ENCODE measurements at regions of chr13 and their contacts with region 1.

Region 1: GRCh38 chr13:97432917-97433726 is 847 bp upstream of the RAP2A start:
- DNase-seq: peak; percentile 100
- H3K4me3 Mint-ChIP-seq: peak overlapping the region; percentile 85
- H3K27ac Mint-ChIP-seq: peak overlapping the region; percentile 91
- H3K4me1 Mint-ChIP-seq: peaks cover 28% of the 10 kb centered on the region
- H3K27me3 Mint-ChIP-seq: no peaks in the 10 kb centered on the region
- CTCF ChIP-seq: no peak

Region 2: GRCh38 chr13:95564733-95565291 is 1868.3 kb before region 1 on chr13:
- CTCF ChIA-PET with region 1: no interaction called
- POLR2A ChIA-PET with region 1: no interaction called
- intact Hi-C with region 1: loop called (anchors 10 kb)
- DNase-seq: peak; percentile 92
- H3K4me3 Mint-ChIP-seq: peak overlapping the region; percentile 56
- H3K27ac Mint-ChIP-seq: peak overlapping the region; percentile 17
- H3K4me1 Mint-ChIP-seq: peaks cover 26% of the 10 kb centered on the region
- H3K27me3 Mint-ChIP-seq: no peaks in the 10 kb centered on the region
- CTCF ChIP-seq: no peak

Region 3: GRCh38 chr13:97124916-97125809 is 308.0 kb before region 1 on chr13:
- CTCF ChIA-PET with region 1: no interaction called
- POLR2A ChIA-PET with region 1: interaction called, 7 read pairs
- intact Hi-C with region 1: loop called (anchors 1 kb)
- DNase-seq: peak; percentile 89
- H3K4me3 Mint-ChIP-seq: peak overlapping the region; percentile 28
- H3K27ac Mint-ChIP-seq: peak overlapping the region; percentile 21
- H3K4me1 Mint-ChIP-seq: peaks cover 47% of the 10 kb centered on the region
- H3K27me3 Mint-ChIP-seq: no peaks in the 10 kb centered on the region
- CTCF ChIP-seq: no peak

Region 4: GRCh38 chr13:97367016-97367822 is 65.9 kb before region 1 on chr13:
- CTCF ChIA-PET with region 1: interaction called, 7 read pairs
- POLR2A ChIA-PET with region 1: interaction called, 12 read pairs
- intact Hi-C with region 1: no loop called
- DNase-seq: peak; percentile 18
- H3K4me3 Mint-ChIP-seq: no peak overlapping the region
- H3K27ac Mint-ChIP-seq: peak overlapping the region; percentile 62
- H3K4me1 Mint-ChIP-seq: peaks cover 6% of the 10 kb centered on the region
- H3K27me3 Mint-ChIP-seq: no peaks in the 10 kb centered on the region
- CTCF ChIP-seq: no peak

Region 5: DNA sequence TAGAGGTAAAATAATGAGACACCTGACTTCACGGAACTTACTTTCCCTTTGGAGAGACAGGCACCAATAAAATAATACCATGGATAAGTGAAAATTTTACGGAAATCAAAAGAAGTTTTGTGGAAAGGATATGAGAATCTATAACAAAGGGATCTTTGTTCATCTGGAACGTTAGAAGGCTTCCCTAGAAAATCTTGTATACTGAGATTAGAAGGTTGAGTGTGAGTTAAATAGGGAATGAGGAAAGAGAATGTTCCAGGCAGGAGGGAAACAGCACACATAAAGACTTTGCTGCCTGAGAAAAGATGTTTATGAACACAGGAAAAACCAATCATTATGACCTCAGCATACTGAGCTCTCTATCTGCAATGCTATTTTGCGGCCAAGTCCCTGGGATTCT is 18.7 kb before region 1 on chr13:
- CTCF ChIA-PET with region 1: no interaction called
- POLR2A ChIA-PET with region 1: interaction called, 13 read pairs
- intact Hi-C with region 1: no loop called
- DNase-seq: no peak
- H3K4me3 Mint-ChIP-seq: no peak overlapping the region
- H3K27ac Mint-ChIP-seq: no peak overlapping the region
- H3K4me1 Mint-ChIP-seq: no peaks in the 10 kb centered on the region
- H3K27me3 Mint-ChIP-seq: no peaks in the 10 kb centered on the region
- CTCF ChIP-seq: no peak

Region 6: GRCh38 chr13:97798836-97799235 is 365.7 kb after region 1 on chr13:
- CTCF ChIA-PET with region 1: interaction called, 16 read pairs
- POLR2A ChIA-PET with region 1: interaction called, 48 read pairs
- intact Hi-C with region 1: loop called (anchors 1 kb)
- DNase-seq: no peak
- H3K4me3 Mint-ChIP-seq: peak overlapping the region; percentile 38
- H3K27ac Mint-ChIP-seq: peak overlapping the region; percentile 76
- H3K4me1 Mint-ChIP-seq: peaks cover 26% of the 10 kb centered on the region
- H3K27me3 Mint-ChIP-seq: no peaks in the 10 kb centered on the region
- CTCF ChIP-seq: no peak

Measured in MCF 10A (cell line).